ENCODE measurements at regions of chr3 and their contacts with region 1.

Region 1: DNA sequence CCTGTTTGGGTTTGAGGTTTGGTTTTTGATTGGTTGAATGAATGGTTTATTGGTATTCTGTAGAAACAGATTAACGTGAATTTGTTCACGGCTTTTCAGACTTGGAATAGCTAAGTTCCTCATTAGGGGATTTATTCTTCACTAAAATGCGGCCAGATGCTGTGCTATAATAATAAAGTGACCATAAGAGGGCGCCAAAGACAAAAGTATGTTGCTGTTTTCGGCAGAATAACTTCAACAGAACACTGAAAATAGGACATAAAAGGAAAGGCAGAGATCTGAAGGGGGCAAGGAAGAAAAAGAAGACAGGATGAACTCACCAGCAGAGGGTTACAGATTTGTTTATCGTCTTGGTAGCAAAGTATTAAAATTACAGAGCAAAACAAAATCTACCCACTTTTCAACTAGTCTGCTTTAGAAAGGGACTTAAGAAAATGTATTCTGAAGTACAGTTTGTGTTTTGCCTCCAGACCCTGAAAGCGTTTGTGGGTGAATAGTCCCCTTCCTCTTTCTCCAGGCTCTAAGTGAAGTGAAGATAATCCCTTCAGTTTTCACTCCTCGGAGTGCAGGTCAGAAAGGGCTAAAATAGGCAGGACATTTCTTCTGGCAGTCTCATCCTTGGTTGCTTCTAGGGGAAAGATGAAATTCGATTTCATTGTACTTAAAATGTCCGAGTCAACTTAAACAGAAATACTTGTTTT is 147.6 kb downstream of the IL20RB start:
- DNase-seq: peak; percentile 19
- ATAC-seq: peak; percentile 88
- H3K4me3 ChIP-seq: no peak overlapping the region
- H3K27ac ChIP-seq: no peak overlapping the region
- H3K4me1 ChIP-seq: no peaks in the 10 kb centered on the region
- H3K27me3 ChIP-seq: no peaks in the 10 kb centered on the region; a peak in 1 of 4 replicates
- CTCF ChIP-seq: peak; percentile 51 to 76 (median 67); a peak in 5 of 6 replicates
- EP300 ChIP-seq: no peak
- POLR2A ChIP-seq: no peak
- RAD21 ChIP-seq: peak; percentile 94

Region 2: DNA sequence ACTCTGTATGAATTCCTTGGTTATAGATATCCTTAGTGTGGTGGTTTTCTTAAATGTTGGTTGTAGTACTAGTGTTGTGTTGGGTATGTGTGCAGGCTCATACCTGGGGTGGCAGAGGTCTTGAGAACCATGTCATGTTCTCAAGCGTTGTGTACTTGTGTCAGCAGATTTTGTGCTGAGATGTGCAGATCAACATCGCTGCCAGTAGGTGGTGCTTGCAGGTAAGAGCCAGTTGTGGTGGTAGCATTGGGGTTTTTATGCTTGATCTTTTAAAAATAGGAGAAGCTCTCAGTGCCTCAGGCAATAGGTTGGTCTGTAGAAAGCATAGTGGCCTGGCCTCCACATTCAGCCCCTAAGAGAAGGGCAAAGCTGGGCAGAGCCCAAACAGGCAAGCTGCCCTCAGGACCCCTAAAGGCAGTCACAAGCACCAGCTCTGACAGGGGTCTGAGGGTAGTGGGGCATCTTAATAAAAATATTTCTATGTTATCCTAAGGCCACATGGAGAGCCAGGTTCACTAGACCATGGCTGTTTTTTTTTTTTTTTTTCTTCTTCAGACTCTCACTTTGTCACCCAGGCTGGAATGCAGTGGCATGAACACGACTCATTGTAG is 16.4 kb after region 1 on chr3:
- CTCF ChIA-PET with region 1: interaction called, 22 read pairs
- POLR2A ChIA-PET with region 1: no interaction called
- RAD21 ChIA-PET with region 1: interaction called, 6 read pairs
- SMC1A ChIA-PET with region 1: interaction called, 5 read pairs
- in situ Hi-C with region 1: no loop called
- intact Hi-C with region 1: no loop called
- DNase-seq: peak; percentile 8
- ATAC-seq: peak; percentile 92
- H3K4me3 ChIP-seq: no peak overlapping the region
- H3K27ac ChIP-seq: no peak overlapping the region
- H3K4me1 ChIP-seq: no peaks in the 10 kb centered on the region
- H3K27me3 ChIP-seq: no peaks in the 10 kb centered on the region
- CTCF ChIP-seq: peak; percentile 75 to 81 (median 80)
- EP300 ChIP-seq: no peak
- POLR2A ChIP-seq: no peak
- RAD21 ChIP-seq: peak; percentile 91

Region 3: GRCh38 chr3:137778941-137779340 is 673.5 kb after region 1 on chr3:
- CTCF ChIA-PET with region 1: no interaction called
- POLR2A ChIA-PET with region 1: no interaction called
- RAD21 ChIA-PET with region 1: no interaction called
- SMC1A ChIA-PET with region 1: no interaction called
- in situ Hi-C with region 1: no loop called
- intact Hi-C with region 1: loop called (anchors 5 kb)
- DNase-seq: no peak
- ATAC-seq: no peak
- H3K4me3 ChIP-seq: no peak overlapping the region
- H3K27ac ChIP-seq: no peak overlapping the region
- H3K4me1 ChIP-seq: no peaks in the 10 kb centered on the region
- H3K27me3 ChIP-seq: no peaks in the 10 kb centered on the region; a peak in 1 of 4 replicates
- CTCF ChIP-seq: no peak
- EP300 ChIP-seq: no peak
- POLR2A ChIP-seq: no peak
- RAD21 ChIP-seq: no peak

Region 4: GRCh38 chr3:137946345-137946973 is 841.0 kb after region 1 on chr3:
- CTCF ChIA-PET with region 1: interaction called, 24 read pairs
- POLR2A ChIA-PET with region 1: no interaction called
- RAD21 ChIA-PET with region 1: interaction called, 16 read pairs
- SMC1A ChIA-PET with region 1: interaction called, 9 read pairs
- in situ Hi-C with region 1: no loop called
- intact Hi-C with region 1: loop called (anchors 1 kb)
- DNase-seq: no peak
- ATAC-seq: peak; percentile 93
- H3K4me3 ChIP-seq: no peak overlapping the region
- H3K27ac ChIP-seq: no peak overlapping the region
- H3K4me1 ChIP-seq: no peaks in the 10 kb centered on the region
- H3K27me3 ChIP-seq: no peaks in the 10 kb centered on the region
- CTCF ChIP-seq: peak; percentile 65 to 69 (median 68); a peak in 5 of 6 replicates
- EP300 ChIP-seq: no peak
- POLR2A ChIP-seq: no peak
- RAD21 ChIP-seq: peak; percentile 91